ENCODE measurements at regions of chr19 and their contacts with region 1.

Region 1: GRCh38 chr19:48333467-48334384 is 8.4 kb downstream of the EMP3 start:
- DNase-seq: peak; percentile 90

Region 2: GRCh38 chr19:48315712-48316111 is 18.0 kb before region 1 on chr19:
- CTCF ChIA-PET with region 1: interaction called, 78 read pairs
- POLR2A ChIA-PET with region 1: interaction called, 93 read pairs
- DNase-seq: no peak

Region 3: DNA sequence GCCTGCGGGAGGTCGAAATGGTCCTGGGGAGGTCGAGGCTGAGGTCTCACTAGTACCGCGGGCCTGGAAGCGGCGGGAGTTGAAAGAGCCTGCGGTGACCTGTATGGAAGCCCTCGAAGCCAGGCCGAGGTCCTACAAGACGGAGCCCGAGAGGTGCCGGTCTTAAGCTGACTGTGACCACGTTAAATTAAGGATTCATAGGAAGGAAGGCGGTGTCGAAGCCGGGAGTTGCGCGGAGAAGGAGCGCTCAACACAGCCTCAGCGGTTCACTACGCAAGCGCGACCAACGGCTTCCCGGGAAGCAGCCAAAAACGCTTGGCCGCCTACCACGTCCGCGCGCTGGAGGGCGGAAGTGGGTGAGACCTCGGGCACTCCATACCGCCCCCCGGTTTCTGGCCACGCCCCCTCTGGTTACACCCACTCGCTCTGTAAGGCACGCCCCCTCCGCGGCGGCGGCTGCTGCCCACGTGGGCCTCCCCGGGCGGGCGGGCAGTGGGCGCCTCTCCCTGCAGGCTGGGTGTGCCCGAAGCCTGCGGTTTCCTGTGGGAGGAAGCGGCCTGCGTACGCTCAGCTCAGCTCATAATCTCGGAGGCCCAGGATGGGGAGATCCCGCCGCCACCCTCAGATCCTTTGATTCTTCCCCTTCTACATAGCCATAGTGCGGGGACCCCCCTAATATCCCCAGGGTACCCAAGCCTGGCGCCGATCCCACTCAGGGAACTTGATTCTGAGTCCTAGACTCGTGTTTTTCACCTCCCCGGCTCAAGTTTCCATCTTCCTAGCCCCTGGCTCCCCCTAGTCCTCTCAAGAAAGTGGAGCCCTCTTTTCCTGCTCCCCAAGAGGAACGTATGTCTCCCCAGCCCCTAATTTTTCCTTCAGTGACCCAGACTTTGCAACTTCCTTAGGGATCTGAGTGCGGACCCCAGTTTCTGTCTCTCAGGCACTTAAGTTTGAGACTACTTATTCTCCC is 11.8 kb before region 1 on chr19:
- CTCF ChIA-PET with region 1: interaction called, 78 read pairs
- POLR2A ChIA-PET with region 1: interaction called, 93 read pairs
- DNase-seq: peak; percentile 91